ENCODE measurements at regions of chr16 and their contacts with region 1.

Region 1: GRCh38 chr16:85986931-85987749 is 88.2 kb downstream of the IRF8 start:
- DNase-seq: no peak
- ATAC-seq: peak; percentile 40
- H3K4me3 ChIP-seq: no peak overlapping the region
- H3K27ac ChIP-seq: no peak overlapping the region
- H3K4me1 ChIP-seq: no peaks in the 10 kb centered on the region
- H3K27me3 ChIP-seq: peaks cover 83% of the 10 kb centered on the region
- CTCF ChIP-seq: peak; percentile 24; the same call in 1 of the 2 replicates
- POLR2A ChIP-seq: no peak
- RAD21 ChIP-seq: peak; percentile 55

Region 2: DNA sequence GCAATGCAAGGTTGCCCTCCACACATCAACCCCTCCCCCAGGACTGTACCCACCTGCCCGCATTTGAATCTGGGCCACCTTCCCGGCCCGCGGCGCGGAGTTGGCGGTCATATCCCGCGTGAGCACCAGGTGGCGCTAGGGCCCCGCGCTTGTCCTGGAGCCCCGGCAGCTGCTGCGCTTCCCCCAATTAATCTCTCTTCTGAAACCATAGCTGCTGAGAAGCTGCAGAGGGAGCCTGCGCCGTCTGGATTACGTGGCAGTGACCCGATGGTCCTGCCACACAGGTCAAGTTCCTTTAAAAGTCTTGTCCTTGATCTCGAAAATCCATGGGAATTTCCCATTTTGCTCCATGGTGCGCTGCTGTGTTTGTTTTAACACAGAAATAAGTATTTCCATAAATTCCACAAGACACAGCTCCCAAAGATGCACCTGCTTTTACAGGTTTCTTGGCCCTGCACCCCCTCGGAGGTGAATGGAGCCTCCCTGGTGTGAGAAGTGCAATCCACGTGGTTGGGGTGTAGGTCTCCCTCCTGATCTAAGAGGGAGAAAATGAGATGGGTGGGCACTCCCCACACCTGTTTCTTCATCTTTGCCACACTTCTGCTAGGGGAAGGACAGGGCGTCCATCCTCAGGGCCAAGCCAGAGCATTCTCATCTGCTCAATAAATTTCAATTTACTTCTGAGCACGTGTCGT is 165.6 kb before region 1 on chr16:
- CTCF ChIA-PET with region 1: interaction called, 16 read pairs
- POLR2A ChIA-PET with region 1: no interaction called
- dilution Hi-C with region 1: no loop called
- in situ Hi-C with region 1: loop called (anchors 10 kb)
- intact Hi-C with region 1: loop called (anchors 1 kb)
- DNase-seq: peak; percentile 76
- ATAC-seq: peak; percentile 91
- H3K4me3 ChIP-seq: no peak overlapping the region
- H3K27ac ChIP-seq: no peak overlapping the region
- H3K4me1 ChIP-seq: peaks cover 3% of the 10 kb centered on the region; the same call in 1 of the 2 replicates
- H3K27me3 ChIP-seq: peaks cover 28% of the 10 kb centered on the region
- CTCF ChIP-seq: peak; percentile 98
- POLR2A ChIP-seq: 0 out of 2 replicates have a peak, but pooled peaks have one; percentile 57
- RAD21 ChIP-seq: peak; percentile 99

Region 3: GRCh38 chr16:85888405-85889331 is 98.5 kb before region 1 on chr16:
- CTCF ChIA-PET with region 1: no interaction called
- POLR2A ChIA-PET with region 1: no interaction called
- dilution Hi-C with region 1: no loop called
- in situ Hi-C with region 1: no loop called
- intact Hi-C with region 1: no loop called
- DNase-seq: peak; percentile 65
- ATAC-seq: no peak
- H3K4me3 ChIP-seq: no peak overlapping the region
- H3K27ac ChIP-seq: no peak overlapping the region
- H3K4me1 ChIP-seq: peaks cover 2% of the 10 kb centered on the region
- H3K27me3 ChIP-seq: peaks cover 48% of the 10 kb centered on the region
- CTCF ChIP-seq: no peak
- POLR2A ChIP-seq: no peak
- RAD21 ChIP-seq: no peak

Measured in IMR-90 (cell line).